CD8-positive, alpha-beta memory T cell (primary cell): ENCODE measurements at regions of chr6 and their contacts with region 1.

Region 1: DNA sequence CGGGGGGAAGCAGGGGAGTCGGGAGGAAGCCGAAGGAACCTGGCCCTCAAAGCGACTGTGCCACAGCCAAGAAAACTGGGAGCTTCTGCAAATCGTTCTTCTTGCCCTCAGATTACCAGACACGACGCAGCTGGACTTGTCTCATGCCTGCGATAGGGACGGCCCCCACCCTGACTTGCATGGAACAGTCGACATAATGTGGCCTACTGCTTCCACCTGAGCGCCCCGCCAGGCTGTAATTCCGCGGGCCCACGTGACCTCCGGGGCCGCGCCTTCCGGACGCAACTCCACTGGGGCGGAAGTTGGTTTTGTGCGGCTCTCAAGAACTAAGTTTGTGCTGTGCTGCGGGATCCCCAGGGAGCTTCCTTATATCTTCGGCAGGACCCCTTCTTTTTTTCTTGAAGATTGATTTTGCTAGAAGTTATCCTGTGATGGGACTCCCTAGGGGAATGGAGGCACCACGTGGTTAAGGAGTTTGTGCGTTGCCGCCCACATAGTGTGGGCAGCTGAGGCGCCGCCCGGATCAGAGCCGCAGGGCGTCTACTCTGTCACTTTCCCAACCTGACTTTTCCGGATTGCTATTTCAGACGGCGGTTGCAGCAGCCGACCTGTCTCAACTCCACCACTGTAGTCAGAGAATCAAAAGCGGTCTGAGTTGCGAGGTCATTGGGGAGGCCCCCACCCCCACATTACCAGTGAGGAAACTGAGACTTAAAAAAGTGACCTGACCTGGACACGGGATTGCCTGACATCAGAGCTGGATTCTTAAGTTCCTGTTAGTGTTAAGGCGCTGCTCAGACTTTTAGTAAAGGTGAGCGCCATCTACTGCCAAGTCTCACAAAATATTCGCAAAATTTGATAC is 540 bp upstream of the CD164 start:
- DNase-seq: peak; percentile 86 to 96 (median 95)
- H3K4me3 ChIP-seq: peak overlapping the region; percentile 88
- H3K4me3 Mint-ChIP-seq: peak overlapping the region; percentile 92 to 99 (median 97)
- H3K27ac ChIP-seq: peak overlapping the region; percentile 97
- H3K27ac Mint-ChIP-seq: peak overlapping the region; percentile 98 to 99 (median 99)
- H3K4me1 ChIP-seq: peaks cover 31% of the 10 kb centered on the region
- H3K4me1 Mint-ChIP-seq: peaks cover 34 to 43% (median 39%) of the 10 kb centered on the region in 3 donors
- H3K27me3 ChIP-seq: no peaks in the 10 kb centered on the region
- H3K27me3 Mint-ChIP-seq: peaks cover 2 to 3% of the 10 kb centered on the region in 2 donors

Region 2: GRCh38 chr6:109095027-109095834 is 287.6 kb before region 1 on chr6 and contains the start of gene CEP57L1:
- CTCF ChIA-PET with region 1: interaction called, 14 read pairs
- POLR2A ChIA-PET with region 1: interaction called, 17 read pairs
- DNase-seq: peak; percentile 88 to 96 (median 94)
- H3K4me3 ChIP-seq: peak within 1 kb of the TSS; percentile 95
- H3K4me3 Mint-ChIP-seq: peak within 1 kb of the TSS; percentile 92 to 96 (median 93)
- H3K27ac ChIP-seq: peak within 1 kb of the TSS; percentile 98
- H3K27ac Mint-ChIP-seq: peak within 1 kb of the TSS; percentile 98 to 99 (median 99)
- H3K4me1 ChIP-seq: peaks cover 33% of the 10 kb centered on the region
- H3K4me1 Mint-ChIP-seq: peaks cover 49 to 58% (median 54%) of the 10 kb centered on the region in 3 donors
- H3K27me3 ChIP-seq: no peaks in the 10 kb centered on the region
- H3K27me3 Mint-ChIP-seq: no peaks in the 10 kb centered on the region
- total RNA-seq, gene CEP57L1: 18.6 to 19.1 TPM

Region 3: GRCh38 chr6:109393888-109394285 is 11.1 kb after region 1 on chr6:
- CTCF ChIA-PET with region 1: interaction called, 18 read pairs
- POLR2A ChIA-PET with region 1: interaction called, 6 read pairs
- DNase-seq: no peak
- H3K4me3 ChIP-seq: no peak overlapping the region
- H3K4me3 Mint-ChIP-seq: no peak overlapping the region
- H3K27ac ChIP-seq: no peak overlapping the region
- H3K27ac Mint-ChIP-seq: no peak overlapping the region
- H3K4me1 ChIP-seq: no peaks in the 10 kb centered on the region
- H3K4me1 Mint-ChIP-seq: no peaks in the 10 kb centered on the region
- H3K27me3 ChIP-seq: no peaks in the 10 kb centered on the region
- H3K27me3 Mint-ChIP-seq: no peaks in the 10 kb centered on the region

Region 4: DNA sequence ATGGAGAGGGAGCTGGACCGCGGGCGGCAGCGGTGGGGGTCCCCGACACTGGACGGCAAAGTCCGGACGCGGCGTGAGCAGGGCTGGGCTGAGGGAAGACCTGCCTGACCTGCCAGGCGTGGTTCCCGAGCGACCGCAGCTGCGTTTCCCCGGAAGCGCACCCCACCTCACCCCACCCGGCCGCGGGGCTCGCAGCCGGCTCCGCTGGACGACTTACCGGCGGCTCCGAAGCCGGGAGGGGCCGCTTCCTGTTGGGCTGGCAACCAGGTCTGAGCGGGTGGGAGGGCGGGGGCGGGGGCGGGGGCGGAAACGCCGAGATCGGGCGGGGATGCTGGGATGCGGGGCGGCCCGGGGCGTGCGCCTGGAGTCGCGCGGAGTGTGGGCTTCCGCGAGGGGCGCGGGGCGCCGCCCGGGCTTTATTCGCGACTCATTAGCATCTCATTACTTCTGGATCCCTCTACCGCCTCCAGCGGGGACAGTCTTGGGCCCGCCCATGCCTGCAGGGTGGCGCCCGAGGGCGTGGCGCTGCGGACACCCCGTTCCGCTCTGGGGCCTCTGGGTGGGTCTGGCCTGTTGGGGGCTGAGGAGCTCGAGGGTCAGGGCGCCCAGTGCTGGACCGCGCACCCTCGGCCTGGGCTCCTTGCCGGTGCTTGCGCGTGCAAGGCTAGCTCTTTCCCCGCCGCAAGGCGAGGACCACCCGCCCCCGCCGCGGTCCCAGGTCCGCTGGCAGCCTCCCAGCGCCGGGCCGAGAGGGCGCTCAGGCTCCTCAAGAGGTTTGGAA is 72.9 kb after region 1 on chr6 and contains the start of gene MICAL1:
- CTCF ChIA-PET with region 1: interaction called, 24 read pairs
- POLR2A ChIA-PET with region 1: interaction called, 20 read pairs
- DNase-seq: peak; percentile 71 to 88 (median 79)
- H3K4me3 ChIP-seq: peak within 1 kb of the TSS; percentile 91
- H3K4me3 Mint-ChIP-seq: peak within 1 kb of the TSS; percentile 90 to 99 (median 97)
- H3K27ac ChIP-seq: peak within 1 kb of the TSS; percentile 94
- H3K27ac Mint-ChIP-seq: peak within 1 kb of the TSS; percentile 88 to 100 (median 98)
- H3K4me1 ChIP-seq: peaks cover 55% of the 10 kb centered on the region
- H3K4me1 Mint-ChIP-seq: peaks cover 51 to 67% (median 57%) of the 10 kb centered on the region in 3 donors
- H3K27me3 ChIP-seq: no peaks in the 10 kb centered on the region
- H3K27me3 Mint-ChIP-seq: peaks cover 0 to 1% of the 10 kb centered on the region in 2 donors
- total RNA-seq, gene MICAL1: 33.2 to 34.7 TPM

Region 5: DNA sequence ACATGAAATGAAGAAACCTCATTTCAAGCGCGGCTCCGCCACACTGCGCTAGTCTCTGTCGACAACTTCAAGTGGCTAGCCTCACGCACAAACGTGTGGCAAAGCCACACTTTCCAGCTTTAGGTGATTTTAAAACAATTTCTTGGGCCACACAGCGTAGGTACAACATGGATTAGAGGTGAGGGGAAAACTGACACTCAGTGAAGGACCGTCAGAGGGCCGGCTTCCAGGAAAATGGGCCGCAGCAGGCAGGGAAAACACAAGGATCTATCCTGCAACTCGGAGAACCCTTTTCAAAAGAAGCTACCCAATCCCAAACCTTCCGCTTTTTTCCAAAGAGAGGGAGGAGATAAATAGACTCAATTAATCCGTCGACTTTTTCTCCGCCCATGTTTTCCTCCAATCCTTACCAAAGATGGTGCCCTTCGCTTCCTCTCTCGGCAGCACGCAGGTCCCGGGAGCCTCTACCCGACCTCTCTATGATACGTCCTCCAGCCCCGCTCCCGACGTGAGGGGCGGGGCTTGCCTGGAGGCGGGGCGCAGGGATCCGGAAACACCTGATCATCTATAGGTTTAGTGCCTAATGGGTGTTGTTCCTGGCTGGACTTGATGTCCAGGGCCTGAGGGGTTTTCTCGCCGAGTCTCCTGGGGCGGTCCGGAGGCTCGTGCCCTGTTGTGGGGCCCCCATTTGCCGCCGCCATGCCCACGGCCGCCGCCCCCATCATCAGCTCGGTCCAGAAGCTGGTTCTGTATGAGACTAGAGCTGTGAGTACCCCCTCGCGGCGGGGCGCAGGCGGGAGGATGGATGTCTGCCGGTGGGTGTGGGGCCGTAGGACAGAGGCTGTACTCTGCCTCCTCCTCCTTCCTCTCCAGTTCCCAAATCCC is 308.2 kb after region 1 on chr6 and contains the starts of genes AK9 and FIG4:
- CTCF ChIA-PET with region 1: interaction called, 5 read pairs
- POLR2A ChIA-PET with region 1: interaction called, 13 read pairs
- DNase-seq: peak; percentile 80 to 90 (median 85)
- H3K4me3 ChIP-seq: peak within 1 kb of the TSS; percentile 97
- H3K4me3 Mint-ChIP-seq: peak within 1 kb of the TSS; percentile 91 to 97 (median 93)
- H3K27ac ChIP-seq: peak within 1 kb of the TSS; percentile 81
- H3K27ac Mint-ChIP-seq: peak within 1 kb of the TSS; percentile 72 to 98 (median 96)
- H3K4me1 ChIP-seq: peaks cover 11% of the 10 kb centered on the region
- H3K4me1 Mint-ChIP-seq: peaks cover 21 to 46% (median 35%) of the 10 kb centered on the region in 3 donors
- H3K27me3 ChIP-seq: no peaks in the 10 kb centered on the region
- H3K27me3 Mint-ChIP-seq: no peaks in the 10 kb centered on the region
- total RNA-seq, gene AK9: 5.1 to 5.6 TPM
- total RNA-seq, gene FIG4: 11.2 to 13.2 TPM